WTC11 (cell line): ENCODE measurements at regions of chr18 and their contacts with region 1.

Region 1: DNA sequence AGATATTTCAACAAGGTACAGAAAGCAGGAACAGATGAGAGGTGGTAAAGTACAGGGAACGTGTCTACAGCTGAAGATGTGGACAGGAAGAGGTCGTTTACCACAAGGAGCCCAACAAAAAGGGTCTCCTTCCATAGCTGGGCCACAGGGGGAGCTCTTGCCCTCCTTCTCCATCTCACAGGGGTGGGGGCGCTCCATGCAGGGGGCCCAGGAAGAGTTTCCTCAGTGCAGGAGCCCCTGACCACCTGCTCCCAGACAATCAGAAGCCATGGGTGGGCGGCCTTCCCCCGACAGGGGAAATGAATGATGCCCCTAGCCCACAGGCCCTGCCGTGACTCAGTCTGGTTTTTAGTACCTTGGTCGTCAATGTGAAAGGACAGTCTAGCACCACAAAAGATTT is 163.6 kb upstream of the ZNF516 start:
- DNase-seq: peak; percentile 83
- ATAC-seq: peak; percentile 94
- H3K4me3 Mint-ChIP-seq: no peak overlapping the region
- H3K27ac Mint-ChIP-seq: no peak overlapping the region
- H3K4me1 Mint-ChIP-seq: peaks cover 15% of the 10 kb centered on the region
- H3K27me3 Mint-ChIP-seq: no peaks in the 10 kb centered on the region
- CTCF ChIP-seq: peak; percentile 63

Region 2: DNA sequence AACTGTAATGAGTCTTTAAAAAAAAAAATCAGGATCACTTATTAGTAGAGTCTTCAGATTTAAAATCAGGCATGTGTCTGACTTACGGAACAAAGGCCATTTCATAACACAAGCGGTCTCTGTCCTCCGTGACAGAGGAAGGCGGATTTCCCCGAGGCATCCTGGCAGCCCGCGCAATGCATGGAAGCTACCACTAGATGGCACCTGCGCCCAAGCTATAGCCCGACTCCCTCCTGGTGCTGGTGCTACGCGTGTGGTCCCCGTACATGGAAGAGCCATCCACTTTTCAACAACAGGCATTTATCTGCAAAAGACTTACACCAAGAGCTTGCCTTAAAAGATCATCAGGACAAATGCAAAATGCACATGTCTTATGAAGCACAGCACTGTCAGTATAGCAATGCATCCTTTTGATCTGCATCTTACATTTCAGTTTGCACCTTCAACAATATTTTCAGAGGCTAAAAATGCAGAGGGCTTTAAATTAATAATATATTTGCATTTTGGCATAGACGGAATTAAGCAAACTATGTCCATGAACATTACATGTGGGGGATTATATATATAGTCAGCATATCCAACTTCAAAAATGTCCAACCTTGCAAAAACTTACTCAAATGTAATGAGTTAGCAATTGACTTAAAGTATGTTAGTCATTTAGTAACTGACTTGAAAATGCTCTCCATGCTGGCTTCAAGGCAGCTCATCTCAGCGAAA is 259.6 kb before region 1 on chr18:
- CTCF ChIA-PET with region 1: interaction called, 10 read pairs
- POLR2A ChIA-PET with region 1: no interaction called
- DNase-seq: peak; percentile 84
- ATAC-seq: peak; percentile 85
- H3K4me3 Mint-ChIP-seq: no peak overlapping the region
- H3K27ac Mint-ChIP-seq: 0 out of 2 replicates have a peak overlapping the region, but pooled peaks have one; percentile 23
- H3K4me1 Mint-ChIP-seq: peaks cover 27% of the 10 kb centered on the region
- H3K27me3 Mint-ChIP-seq: no peaks in the 10 kb centered on the region
- CTCF ChIP-seq: peak; percentile 84

Region 3: GRCh38 chr18:76558881-76559678 is 99.5 kb before region 1 on chr18:
- CTCF ChIA-PET with region 1: no interaction called
- POLR2A ChIA-PET with region 1: no interaction called
- DNase-seq: no peak
- ATAC-seq: no peak
- H3K4me3 Mint-ChIP-seq: no peak overlapping the region
- H3K27ac Mint-ChIP-seq: no peak overlapping the region
- H3K4me1 Mint-ChIP-seq: no peaks in the 10 kb centered on the region
- H3K27me3 Mint-ChIP-seq: no peaks in the 10 kb centered on the region; the same call in 1 of the 2 replicates
- CTCF ChIP-seq: no peak

Region 4: DNA sequence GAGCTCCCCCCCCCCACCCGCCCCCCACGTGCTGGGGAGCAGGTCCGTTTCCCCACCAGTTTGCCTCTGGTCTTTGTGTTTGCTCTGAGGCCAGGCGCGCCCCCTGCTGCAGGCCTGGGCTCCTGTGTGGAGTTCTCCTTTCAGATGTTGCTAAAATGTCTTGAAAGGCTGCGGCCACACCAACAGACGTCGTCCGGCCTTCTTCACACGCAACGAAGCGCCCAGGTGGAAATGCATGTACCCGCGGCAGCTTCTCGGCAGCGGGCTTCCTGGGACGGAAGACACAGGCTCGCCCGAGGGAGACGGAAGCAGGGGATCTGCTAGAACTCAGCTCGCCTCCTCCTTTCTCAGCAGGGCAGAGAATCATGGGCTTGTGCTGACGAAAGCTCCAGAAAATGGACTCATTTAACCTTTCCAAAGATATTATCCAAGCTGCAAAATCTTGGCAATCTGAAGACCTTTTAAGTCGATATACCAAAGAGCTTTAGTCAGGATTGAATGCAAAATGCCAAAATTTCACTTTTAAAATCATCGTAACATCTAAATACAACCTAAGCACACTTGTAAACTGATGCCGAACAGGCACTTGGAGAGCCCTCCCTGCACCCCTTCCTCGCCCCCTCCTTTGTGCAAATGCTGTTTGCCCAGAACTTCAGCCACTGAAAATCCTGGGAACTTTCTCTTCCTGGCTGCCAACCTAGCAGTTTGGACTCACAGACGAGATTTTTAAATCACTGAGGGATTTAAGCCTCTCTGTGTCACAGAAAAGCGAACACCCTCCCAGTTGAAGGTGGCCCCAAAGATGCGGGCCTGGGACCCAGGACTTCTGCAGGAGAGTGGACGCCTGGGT is 38.1 kb before region 1 on chr18:
- CTCF ChIA-PET with region 1: interaction called, 58 read pairs
- POLR2A ChIA-PET with region 1: no interaction called
- DNase-seq: peak; percentile 81
- ATAC-seq: peak; percentile 75
- H3K4me3 Mint-ChIP-seq: peak overlapping the region; percentile 77
- H3K27ac Mint-ChIP-seq: peak overlapping the region; percentile 89
- H3K4me1 Mint-ChIP-seq: peaks cover 60% of the 10 kb centered on the region
- H3K27me3 Mint-ChIP-seq: peaks cover 39% of the 10 kb centered on the region
- CTCF ChIP-seq: 0 out of 2 replicates have a peak, but pooled peaks have one; percentile 19

Region 5: GRCh38 chr18:76679259-76679658 is 20.6 kb after region 1 on chr18:
- CTCF ChIA-PET with region 1: interaction called, 32 read pairs
- POLR2A ChIA-PET with region 1: interaction called, 3 read pairs
- DNase-seq: peak; percentile 42
- ATAC-seq: peak; percentile 72
- H3K4me3 Mint-ChIP-seq: no peak overlapping the region
- H3K27ac Mint-ChIP-seq: no peak overlapping the region
- H3K4me1 Mint-ChIP-seq: peaks cover 15% of the 10 kb centered on the region
- H3K27me3 Mint-ChIP-seq: no peaks in the 10 kb centered on the region
- CTCF ChIP-seq: no peak

Region 6: DNA sequence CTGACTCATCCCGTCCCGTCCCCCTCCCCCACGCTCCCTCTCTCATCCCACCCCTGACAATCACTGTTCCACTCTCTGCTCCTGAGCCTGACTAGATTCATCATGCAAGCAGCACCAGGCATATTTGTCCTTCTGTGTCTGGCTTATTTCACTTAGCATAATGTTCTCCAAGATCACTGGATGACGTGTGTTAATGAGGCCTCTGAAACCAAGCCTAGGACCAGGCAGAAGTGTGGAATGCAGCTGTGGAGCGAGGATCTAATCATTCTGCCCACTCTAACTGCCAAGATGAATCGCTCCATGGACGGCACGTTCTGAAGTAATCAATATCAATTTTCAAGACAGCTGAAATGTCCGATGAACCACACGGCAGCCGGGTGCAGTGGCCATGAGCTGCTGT is 41.3 kb after region 1 on chr18:
- CTCF ChIA-PET with region 1: interaction called, 10 read pairs
- POLR2A ChIA-PET with region 1: interaction called, 3 read pairs
- DNase-seq: no peak
- ATAC-seq: no peak
- H3K4me3 Mint-ChIP-seq: no peak overlapping the region
- H3K27ac Mint-ChIP-seq: no peak overlapping the region
- H3K4me1 Mint-ChIP-seq: peaks cover 14% of the 10 kb centered on the region
- H3K27me3 Mint-ChIP-seq: no peaks in the 10 kb centered on the region
- CTCF ChIP-seq: no peak